BJ (cell line): ENCODE measurements at regions of chr7 and their contacts with region 1.

Region 1: DNA sequence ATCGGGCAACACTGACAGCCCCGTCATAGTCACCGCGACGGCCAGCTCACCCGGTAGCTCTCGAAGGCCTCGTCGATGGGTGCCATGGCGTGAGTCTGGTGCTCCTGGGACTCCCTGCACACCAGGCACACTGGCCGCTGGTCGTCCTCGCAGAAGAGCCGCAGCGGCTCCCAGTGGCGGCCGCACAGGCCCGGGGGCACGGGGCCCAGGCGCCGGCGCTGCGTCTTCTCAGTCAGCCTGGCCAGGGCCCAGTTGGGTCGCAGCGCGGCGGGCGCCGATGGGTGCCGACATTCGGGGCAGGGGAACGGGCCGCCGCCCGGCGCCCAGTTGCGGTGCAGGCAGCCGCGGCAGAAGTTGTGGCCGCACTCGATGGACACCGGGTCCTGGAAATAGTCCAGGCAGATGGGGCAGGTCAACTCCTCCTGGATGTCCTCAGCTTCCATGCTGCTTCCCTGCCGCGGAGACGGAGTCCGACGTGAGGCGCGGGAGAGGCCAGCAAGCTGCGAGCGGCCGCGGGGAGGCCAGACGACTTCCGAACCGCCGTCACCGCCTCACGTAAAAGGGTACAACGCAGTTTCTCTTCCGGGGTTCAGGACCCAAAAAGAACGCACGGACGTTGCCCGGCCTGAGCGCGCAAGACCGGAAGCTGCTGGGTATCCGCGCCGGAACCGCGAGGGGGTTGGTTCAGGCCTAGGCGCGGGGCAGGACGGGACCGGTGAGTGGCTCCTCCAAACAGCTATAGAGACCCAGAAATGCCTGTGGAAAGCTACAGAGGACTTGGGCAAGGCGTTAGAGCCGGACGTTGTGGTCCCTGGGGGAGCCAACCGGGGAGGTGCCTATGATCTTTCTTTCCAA is at the start of gene TRIM4:
- DNase-seq: peak; percentile 68
- H3K4me3 ChIP-seq: peak within 1 kb of the TSS; percentile 80
- H3K27me3 ChIP-seq: no peaks in the 10 kb centered on the region
- CTCF ChIP-seq: peak; percentile 11; the same call in 1 of the 2 replicates
- polyA plus RNA-seq, gene TRIM4: 18.6 and 25.4 TPM in 2 replicates

Region 2: DNA sequence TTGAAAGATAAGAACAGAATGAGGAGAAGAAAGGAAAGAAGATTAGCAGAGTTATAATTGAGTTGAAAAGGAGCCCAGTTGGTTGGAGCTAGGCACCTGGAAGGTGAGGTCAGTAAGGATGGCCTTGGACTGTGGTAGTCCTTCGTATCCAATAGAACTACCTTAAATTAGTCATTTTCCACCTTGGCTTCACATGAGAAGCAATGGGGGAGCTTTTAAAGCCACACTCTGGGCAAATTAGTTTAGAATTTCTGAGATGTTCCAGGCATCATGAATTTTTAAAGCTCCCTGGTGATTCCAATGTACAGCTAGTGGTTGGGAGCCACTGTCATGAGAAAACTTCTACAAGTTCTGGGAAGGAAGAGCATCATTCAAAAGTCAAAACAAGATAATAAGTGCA is 212.1 kb before region 1 on chr7:
- CTCF ChIA-PET with region 1: no interaction called
- POLR2A ChIA-PET with region 1: no interaction called
- DNase-seq: no peak
- H3K4me3 ChIP-seq: no peak overlapping the region
- H3K27me3 ChIP-seq: no peaks in the 10 kb centered on the region
- CTCF ChIP-seq: no peak

Region 3: DNA sequence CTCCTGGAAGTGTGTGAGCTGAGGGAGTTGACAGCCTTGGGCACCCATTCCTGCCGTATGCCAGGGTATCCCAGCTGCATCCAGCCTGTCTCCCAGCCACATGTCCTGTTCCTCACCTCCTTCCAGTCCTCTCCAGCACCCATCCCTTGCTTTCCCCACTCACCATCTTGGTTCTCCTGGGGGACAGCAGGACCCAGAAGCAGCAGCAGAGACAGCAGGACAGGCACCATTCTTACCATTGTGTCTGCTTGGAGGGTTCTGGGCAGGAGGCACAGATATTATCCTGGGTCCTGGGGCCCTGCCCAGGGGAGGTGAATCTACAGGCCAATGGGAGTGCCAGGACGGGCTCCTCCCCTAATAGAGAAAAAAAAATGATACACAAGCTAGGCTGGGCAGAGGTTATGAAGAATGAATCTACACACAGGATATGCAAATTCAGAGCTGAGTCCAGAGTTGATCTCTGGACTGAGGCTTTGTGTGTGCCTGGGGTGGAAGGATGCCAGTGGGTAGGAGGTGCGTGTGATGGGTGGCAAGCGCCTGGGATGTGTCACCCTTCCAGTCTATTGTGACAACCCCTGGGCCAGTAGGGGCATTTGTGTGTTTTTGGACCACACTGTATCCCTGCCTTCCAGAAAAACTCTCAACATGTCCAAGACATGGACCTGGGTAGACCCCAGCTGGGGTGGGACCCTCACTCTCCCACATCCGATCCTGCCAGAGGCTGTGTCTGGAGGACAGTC is 56.8 kb after region 1 on chr7 and contains the start of gene AZGP1:
- CTCF ChIA-PET with region 1: interaction called, 21 read pairs
- POLR2A ChIA-PET with region 1: no interaction called
- DNase-seq: no peak
- H3K4me3 ChIP-seq: no peak within 1 kb of the TSS
- H3K27me3 ChIP-seq: no peaks in the 10 kb centered on the region
- CTCF ChIP-seq: no peak
- polyA plus RNA-seq, gene AZGP1: not detected in 2 replicates

Region 4: DNA sequence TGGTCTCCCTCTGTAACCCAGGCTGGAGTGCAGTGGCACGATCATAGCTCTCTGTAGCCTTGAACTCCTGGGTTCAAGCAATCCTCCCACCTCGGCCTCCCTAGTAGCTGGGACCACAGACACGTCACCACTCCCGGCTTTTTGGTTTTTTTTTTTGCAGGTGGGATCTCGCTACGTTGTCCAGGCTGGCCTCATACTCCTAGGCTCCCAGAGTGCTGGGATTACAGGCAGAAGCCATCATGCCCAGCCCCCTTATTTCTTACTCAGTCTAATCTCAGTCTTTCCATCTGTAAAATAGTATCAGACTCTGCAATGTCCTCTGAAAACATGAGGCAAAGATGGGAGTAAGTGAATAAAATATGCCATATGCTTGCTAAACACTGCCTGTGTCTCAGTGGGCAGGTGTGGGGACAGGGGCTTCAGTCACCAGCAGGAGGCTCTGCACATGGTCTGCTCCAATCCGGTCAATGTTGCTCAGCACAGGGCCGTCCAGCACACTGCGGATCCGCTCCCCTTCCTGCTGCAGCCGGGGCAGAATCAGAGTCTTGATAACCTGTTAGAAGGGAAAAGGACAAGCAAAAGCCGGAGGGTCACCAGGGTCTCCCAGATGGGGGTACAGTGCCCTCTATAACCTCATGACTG is 190.5 kb after region 1 on chr7:
- CTCF ChIA-PET with region 1: no interaction called
- POLR2A ChIA-PET with region 1: no interaction called
- DNase-seq: no peak
- H3K4me3 ChIP-seq: no peak overlapping the region
- H3K27me3 ChIP-seq: no peaks in the 10 kb centered on the region
- CTCF ChIP-seq: 0 out of 2 replicates have a peak, but pooled peaks have one; percentile 5

Region 5: GRCh38 chr7:100137851-100138760 is 218.9 kb after region 1 on chr7:
- CTCF ChIA-PET with region 1: no interaction called
- POLR2A ChIA-PET with region 1: no interaction called
- DNase-seq: no peak
- H3K4me3 ChIP-seq: no peak overlapping the region
- H3K27me3 ChIP-seq: no peaks in the 10 kb centered on the region
- CTCF ChIP-seq: no peak